ENCODE measurements at regions of chr3 and their contacts with region 1.

Region 1: GRCh38 chr3:137013955-137014688 is 56.3 kb downstream of the IL20RB start:
- DNase-seq: peak; percentile 65 to 96
- H3K4me3 ChIP-seq: peak overlapping the region in 2 of 4 experiments; percentile 4 to 38; a peak in 3 of 8 replicates
- H3K27ac ChIP-seq: no peak overlapping the region
- H3K4me1 ChIP-seq: peaks cover 0 to 4% (median 0%) of the 10 kb centered on the region in 4 experiments; a peak in 1 of 7 replicates
- H3K27me3 ChIP-seq: no peaks in the 10 kb centered on the region
- CTCF ChIP-seq: peak; percentile 74 to 92 (median 81)
- EP300 ChIP-seq: no peak
- POLR2A ChIP-seq: no peak
- RAD21 ChIP-seq: peak; percentile 98 to 100

Region 2: GRCh38 chr3:136390574-136390973 is 623.5 kb before region 1 on chr3:
- CTCF ChIA-PET with region 1: interaction called, 11 read pairs
- POLR2A ChIA-PET with region 1: no interaction called
- DNase-seq: no peak
- H3K4me3 ChIP-seq: no peak overlapping the region
- H3K27ac ChIP-seq: no peak overlapping the region
- H3K4me1 ChIP-seq: no peaks in the 10 kb centered on the region
- H3K27me3 ChIP-seq: no peaks in the 10 kb centered on the region
- CTCF ChIP-seq: no peak
- EP300 ChIP-seq: no peak
- POLR2A ChIP-seq: no peak
- RAD21 ChIP-seq: no peak

Region 3: DNA sequence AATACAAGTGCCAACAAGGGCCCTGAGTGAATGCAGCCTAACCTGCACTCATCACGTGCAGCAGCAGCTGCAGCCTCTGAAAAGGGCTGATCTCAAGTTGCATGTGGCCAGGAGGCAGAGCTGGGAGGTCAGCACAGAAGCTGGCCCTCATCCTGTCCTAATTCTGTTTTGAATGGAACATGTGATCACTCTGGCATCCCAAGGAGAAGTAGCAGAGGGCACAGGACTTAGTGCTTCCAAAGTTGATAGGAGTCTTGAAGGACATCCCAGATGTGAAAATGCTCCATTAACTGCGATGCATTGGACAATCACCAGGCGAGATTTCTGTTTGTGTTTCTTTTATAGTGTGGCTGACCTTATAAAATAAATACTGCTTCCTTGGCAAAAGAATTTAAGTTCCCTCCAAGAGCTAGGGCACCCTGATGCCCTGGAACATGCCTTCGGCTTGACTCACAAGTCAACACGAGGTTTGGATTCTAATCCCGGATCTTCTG is 230.4 kb before region 1 on chr3:
- CTCF ChIA-PET with region 1: interaction called, 11 read pairs
- POLR2A ChIA-PET with region 1: no interaction called
- DNase-seq: no peak
- H3K4me3 ChIP-seq: no peak overlapping the region
- H3K27ac ChIP-seq: no peak overlapping the region
- H3K4me1 ChIP-seq: peaks cover 0 to 6% (median 4%) of the 10 kb centered on the region in 4 experiments; a peak in 4 of 7 replicates
- H3K27me3 ChIP-seq: no peaks in the 10 kb centered on the region
- CTCF ChIP-seq: no peak
- EP300 ChIP-seq: no peak
- POLR2A ChIP-seq: no peak
- RAD21 ChIP-seq: no peak

Region 4: DNA sequence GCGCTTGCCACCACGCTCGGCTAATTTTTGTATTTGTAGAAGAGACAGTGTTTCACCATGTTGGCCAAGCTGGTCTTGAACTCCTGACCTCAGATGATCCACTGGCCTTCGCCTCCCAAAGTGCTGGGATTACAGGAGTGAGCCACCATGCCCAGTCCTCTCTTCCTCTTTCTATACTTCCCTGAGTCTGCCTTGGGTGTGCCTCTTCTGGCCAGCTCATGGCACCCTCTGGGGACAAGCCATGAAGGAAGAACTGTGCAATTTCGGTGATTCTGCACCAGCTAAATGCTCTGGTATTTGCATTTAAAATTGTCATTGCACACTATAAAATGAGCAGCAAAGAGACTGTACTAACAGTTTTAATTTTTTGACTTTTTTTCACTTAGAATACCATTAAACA is 10.2 kb after region 1 on chr3:
- CTCF ChIA-PET with region 1: interaction called, 26 read pairs
- POLR2A ChIA-PET with region 1: interaction called, 3 read pairs
- DNase-seq: no peak
- H3K4me3 ChIP-seq: no peak overlapping the region
- H3K27ac ChIP-seq: no peak overlapping the region
- H3K4me1 ChIP-seq: peaks cover 0 to 4% (median 0%) of the 10 kb centered on the region in 4 experiments; a peak in 1 of 7 replicates
- H3K27me3 ChIP-seq: no peaks in the 10 kb centered on the region
- CTCF ChIP-seq: no peak
- EP300 ChIP-seq: no peak
- POLR2A ChIP-seq: no peak
- RAD21 ChIP-seq: no peak

Region 5: DNA sequence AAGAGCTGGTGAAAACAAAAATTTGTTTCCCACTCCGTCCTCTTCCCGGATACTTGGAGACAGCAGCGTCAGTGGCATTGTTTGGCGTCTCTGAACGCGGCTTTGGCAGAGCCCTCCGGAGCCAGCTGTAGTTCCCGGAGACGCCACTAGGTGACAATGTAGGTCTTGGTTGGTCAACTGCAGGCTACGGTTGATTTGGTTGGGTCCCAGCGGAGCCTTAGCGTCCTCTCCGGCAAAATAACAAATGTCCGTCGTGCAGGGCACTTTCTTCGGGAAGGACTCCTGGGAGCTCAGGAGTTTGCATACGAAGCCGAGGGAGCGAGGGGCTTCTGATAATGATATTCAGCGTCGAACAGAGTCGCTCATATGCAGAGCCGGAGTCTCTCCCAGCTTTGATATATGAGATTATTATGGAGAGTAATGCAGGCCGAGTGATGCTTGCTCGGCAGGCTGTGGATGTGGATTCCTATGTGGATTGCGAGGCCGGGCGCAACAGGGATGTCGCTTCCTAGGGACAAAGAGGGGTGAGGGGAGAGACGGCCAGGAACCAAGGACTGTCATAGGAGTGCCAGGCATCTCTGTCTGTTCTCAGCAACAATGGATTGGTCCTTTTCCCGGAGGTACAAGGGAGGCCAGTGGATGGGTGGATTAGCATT is 18.5 kb after region 1 on chr3:
- CTCF ChIA-PET with region 1: interaction called, 10 read pairs
- POLR2A ChIA-PET with region 1: no interaction called
- DNase-seq: peak; percentile 89 to 100
- H3K4me3 ChIP-seq: peak overlapping the region; percentile 24 to 55 (median 42); a peak in 7 of 8 replicates
- H3K27ac ChIP-seq: no peak overlapping the region
- H3K4me1 ChIP-seq: peaks cover 0 to 13% (median 3%) of the 10 kb centered on the region in 4 experiments; a peak in 5 of 7 replicates
- H3K27me3 ChIP-seq: peaks cover 0 to 22% (median 11%) of the 10 kb centered on the region in 4 experiments; a peak in 6 of 7 replicates
- CTCF ChIP-seq: peak; percentile 90 to 94 (median 94)
- EP300 ChIP-seq: no peak
- POLR2A ChIP-seq: no peak
- RAD21 ChIP-seq: peak; percentile 92 to 98

Region 6: GRCh38 chr3:137121704-137122314 is 107.7 kb after region 1 on chr3:
- CTCF ChIA-PET with region 1: no interaction called
- POLR2A ChIA-PET with region 1: no interaction called
- DNase-seq: no peak
- H3K4me3 ChIP-seq: no peak overlapping the region
- H3K27ac ChIP-seq: no peak overlapping the region
- H3K4me1 ChIP-seq: no peaks in the 10 kb centered on the region
- H3K27me3 ChIP-seq: no peaks in the 10 kb centered on the region
- CTCF ChIP-seq: peak; percentile 72 to 91 (median 83)
- EP300 ChIP-seq: no peak
- POLR2A ChIP-seq: no peak
- RAD21 ChIP-seq: peak; percentile 77 to 85

Measured in H1 (cell line).